HEK293 (cell line): ENCODE measurements at regions of chr2 and their contacts with region 1.

Region 1: GRCh38 chr2:64988420-64989125 is 626 bp upstream of the SLC1A4 start:
- H3K4me3 ChIP-seq: peak overlapping the region; percentile 67
- H3K27ac ChIP-seq: peak overlapping the region; percentile 90
- H3K4me1 ChIP-seq: peaks cover 3% of the 10 kb centered on the region; the same call in 1 of the 2 replicates
- CTCF ChIP-seq: peak; percentile 93

Region 2: GRCh38 chr2:64975232-64975821 is 13.2 kb before region 1 on chr2:
- CTCF ChIA-PET with region 1: interaction called, 4 read pairs
- POLR2A ChIA-PET with region 1: interaction called, 13 read pairs
- H3K4me3 ChIP-seq: no peak overlapping the region
- H3K27ac ChIP-seq: no peak overlapping the region
- H3K4me1 ChIP-seq: no peaks in the 10 kb centered on the region
- CTCF ChIP-seq: no peak